Calu3 (cell line): ENCODE measurements at regions of chr9 and their contacts with region 1.

Region 1: DNA sequence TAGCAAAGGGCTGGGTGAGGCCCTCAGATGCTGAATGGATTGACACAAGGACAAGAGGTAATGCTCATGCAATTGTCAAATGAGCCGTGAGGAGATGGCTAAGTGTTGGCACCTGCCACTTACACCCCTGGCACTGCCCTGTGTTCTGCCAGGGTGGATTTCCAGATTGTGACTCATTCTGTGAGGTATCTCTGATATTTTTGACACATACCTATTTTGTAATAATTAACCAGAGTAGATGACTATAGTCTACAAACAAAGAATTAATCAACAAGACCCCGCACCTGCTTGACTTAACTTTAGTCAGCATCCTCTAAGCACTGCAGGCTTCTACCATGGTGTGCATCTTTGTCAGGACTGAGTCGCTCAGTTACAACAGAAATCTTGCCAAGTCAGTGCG is 200.8 kb downstream of the DIRAS2 start:
- DNase-seq: peak; percentile 53
- H3K4me3 Mint-ChIP-seq: peak overlapping the region; percentile 61
- H3K27ac Mint-ChIP-seq: peak overlapping the region; percentile 84
- H3K4me1 Mint-ChIP-seq: peaks cover 27% of the 10 kb centered on the region
- H3K27me3 Mint-ChIP-seq: no peaks in the 10 kb centered on the region
- CTCF ChIP-seq: no peak

Region 2: GRCh38 chr9:90331826-90332575 is 109.8 kb before region 1 on chr9:
- CTCF ChIA-PET with region 1: no interaction called
- intact Hi-C with region 1: loop called (anchors 10 kb)
- DNase-seq: no peak
- H3K4me3 Mint-ChIP-seq: peak overlapping the region; percentile 60
- H3K27ac Mint-ChIP-seq: peak overlapping the region; percentile 93
- H3K4me1 Mint-ChIP-seq: peaks cover 32% of the 10 kb centered on the region
- H3K27me3 Mint-ChIP-seq: no peaks in the 10 kb centered on the region
- CTCF ChIP-seq: no peak

Region 3: DNA sequence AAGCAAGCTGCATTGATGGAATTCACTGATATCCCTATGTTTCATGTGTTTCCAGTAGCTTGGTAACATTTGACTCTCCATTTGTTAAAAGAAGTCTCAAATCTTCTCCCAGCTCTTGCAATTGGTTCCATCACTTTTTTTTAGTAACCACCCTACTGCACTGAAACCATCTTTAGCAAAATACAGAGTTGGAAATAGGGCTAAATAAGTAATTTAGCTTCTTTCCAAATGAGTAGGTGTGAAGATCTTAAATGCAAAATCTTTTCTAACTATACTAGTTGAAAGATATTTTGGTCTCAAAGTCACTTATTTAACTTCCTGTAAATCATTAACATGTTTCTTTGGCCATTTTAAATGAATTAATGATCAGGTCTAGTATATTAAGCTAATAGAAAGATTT is 62.7 kb after region 1 on chr9:
- CTCF ChIA-PET with region 1: no interaction called
- intact Hi-C with region 1: no loop called
- DNase-seq: no peak
- H3K4me3 Mint-ChIP-seq: no peak overlapping the region
- H3K27ac Mint-ChIP-seq: no peak overlapping the region
- H3K4me1 Mint-ChIP-seq: no peaks in the 10 kb centered on the region
- H3K27me3 Mint-ChIP-seq: no peaks in the 10 kb centered on the region
- CTCF ChIP-seq: no peak

Region 4: DNA sequence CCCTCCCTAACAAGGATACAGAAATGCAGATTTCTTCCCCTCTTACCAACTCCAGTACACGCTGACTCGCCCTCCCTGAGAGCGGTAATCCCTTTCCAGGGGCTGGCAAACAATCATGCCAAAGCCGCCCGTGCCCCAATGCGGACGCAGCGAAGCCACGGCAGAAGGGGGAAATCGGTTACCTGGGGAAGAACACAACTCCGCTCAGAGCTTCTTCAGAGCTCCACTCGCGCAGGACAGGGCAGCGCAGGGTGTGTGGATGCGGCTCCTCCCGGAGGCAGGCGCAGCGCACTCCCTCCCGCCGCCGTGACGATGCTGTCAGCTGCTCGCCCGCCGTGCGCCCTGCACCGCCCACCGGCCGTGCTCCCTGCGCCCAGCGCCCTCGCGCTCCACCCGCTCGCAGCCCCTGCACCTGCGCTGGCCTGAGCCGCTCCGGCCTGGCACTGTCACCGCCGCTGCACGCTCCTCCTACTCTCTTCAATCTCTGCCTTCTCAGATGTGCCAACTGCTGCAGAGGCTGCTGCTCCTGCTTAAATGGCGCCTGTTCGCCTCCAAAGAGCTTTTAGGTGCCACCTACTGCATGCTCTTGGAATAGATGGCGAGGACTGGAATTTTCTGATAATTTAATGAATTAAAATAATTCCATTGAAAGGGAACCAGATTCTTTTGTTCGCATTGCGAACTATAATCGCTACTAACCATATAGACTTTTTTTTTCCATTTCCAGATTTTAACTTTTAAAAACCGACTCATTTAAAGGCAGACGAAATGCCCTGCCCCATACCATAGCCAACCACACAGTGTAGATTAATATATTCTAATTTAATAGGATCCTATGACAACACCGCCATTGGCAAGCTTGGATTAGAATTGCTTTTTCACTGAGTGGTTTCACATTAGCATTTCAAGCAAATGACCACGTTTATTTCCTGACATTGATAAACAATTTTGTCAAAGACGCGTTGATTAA is 201.0 kb after region 1 on chr9 and contains the start of gene DIRAS2:
- CTCF ChIA-PET with region 1: no interaction called
- intact Hi-C with region 1: loop called (anchors 10 kb)
- DNase-seq: peak; percentile 78
- H3K4me3 Mint-ChIP-seq: peak within 1 kb of the TSS; percentile 84
- H3K27ac Mint-ChIP-seq: peak within 1 kb of the TSS; percentile 44
- H3K4me1 Mint-ChIP-seq: peaks cover 10% of the 10 kb centered on the region
- H3K27me3 Mint-ChIP-seq: peaks cover 5% of the 10 kb centered on the region
- CTCF ChIP-seq: peak; percentile 43
- total RNA-seq, gene DIRAS2: 1.5 and 1.7 TPM in 2 replicates